Activated naive CD4-positive, alpha-beta T cell treated with anti-CD3 and anti-CD28 coated beads for 36 hours (primary cell): ENCODE measurements at regions of chr6 and their contacts with region 1.

Region 1: GRCh38 chr6:41545703-41546474 is at the start of gene FOXP4:
- DNase-seq: peak; percentile 89
- H3K4me3 Mint-ChIP-seq: peak within 1 kb of the TSS; percentile 83
- H3K27ac Mint-ChIP-seq: peak within 1 kb of the TSS; percentile 83
- H3K4me1 Mint-ChIP-seq: peaks cover 12% of the 10 kb centered on the region
- H3K27me3 Mint-ChIP-seq: no peaks in the 10 kb centered on the region
- total RNA-seq, gene FOXP4: 15.9 to 16.0 TPM

Region 2: GRCh38 chr6:41442800-41443501 is 102.9 kb before region 1 on chr6:
- CTCF ChIA-PET with region 1: no interaction called
- intact Hi-C with region 1: loop called (anchors 5 kb)
- DNase-seq: peak; percentile 47
- H3K4me3 Mint-ChIP-seq: no peak overlapping the region
- H3K27ac Mint-ChIP-seq: no peak overlapping the region
- H3K4me1 Mint-ChIP-seq: peaks cover 40% of the 10 kb centered on the region
- H3K27me3 Mint-ChIP-seq: peaks cover 5% of the 10 kb centered on the region

Region 3: GRCh38 chr6:41503841-41504465 is 41.9 kb before region 1 on chr6:
- CTCF ChIA-PET with region 1: no interaction called
- intact Hi-C with region 1: loop called (anchors 1 kb)
- DNase-seq: peak; percentile 69
- H3K4me3 Mint-ChIP-seq: peak overlapping the region; percentile 66
- H3K27ac Mint-ChIP-seq: no peak overlapping the region
- H3K4me1 Mint-ChIP-seq: peaks cover 16% of the 10 kb centered on the region
- H3K27me3 Mint-ChIP-seq: peaks cover 47% of the 10 kb centered on the region

Region 4: DNA sequence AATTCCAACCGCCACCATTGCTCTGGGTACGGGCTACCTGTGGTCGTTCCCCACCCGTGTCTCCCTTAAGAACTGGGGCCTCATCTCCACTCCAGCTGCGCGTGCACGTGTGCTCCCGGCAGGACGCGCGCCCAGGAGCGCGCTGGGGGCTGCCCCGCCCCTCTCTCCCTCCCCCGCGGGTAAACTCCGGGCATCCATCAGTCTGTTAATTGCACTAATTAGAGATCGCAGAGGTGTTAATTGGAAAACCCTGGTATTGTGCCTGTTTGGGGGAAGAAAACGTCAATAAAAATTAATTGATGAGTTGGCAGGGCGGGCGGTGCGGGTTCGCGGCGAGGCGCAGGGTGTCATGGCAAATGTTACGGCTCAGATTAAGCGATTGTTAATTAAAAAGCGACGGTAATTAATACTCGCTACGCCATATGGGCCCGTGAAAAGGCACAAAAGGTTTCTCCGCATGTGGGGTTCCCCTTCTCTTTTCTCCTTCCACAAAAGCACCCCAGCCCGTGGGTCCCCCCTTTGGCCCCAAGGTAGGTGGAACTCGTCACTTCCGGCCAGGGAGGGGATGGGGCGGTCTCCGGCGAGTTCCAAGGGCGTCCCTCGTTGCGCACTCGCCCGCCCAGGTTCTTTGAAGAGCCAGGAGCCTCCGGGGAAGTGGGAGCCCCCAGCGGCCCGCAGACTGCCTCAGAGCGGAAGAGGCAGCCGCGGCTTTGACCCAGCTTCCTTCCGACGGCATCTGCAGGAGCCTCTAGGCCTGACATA is 14.7 kb after region 1 on chr6:
- CTCF ChIA-PET with region 1: no interaction called
- intact Hi-C with region 1: loop called (anchors 1 kb)
- DNase-seq: peak; percentile 94
- H3K4me3 Mint-ChIP-seq: peak overlapping the region; percentile 83
- H3K27ac Mint-ChIP-seq: peak overlapping the region; percentile 83
- H3K4me1 Mint-ChIP-seq: peaks cover 26% of the 10 kb centered on the region
- H3K27me3 Mint-ChIP-seq: no peaks in the 10 kb centered on the region